Endothelial cell of umbilical vein (primary cell): ENCODE measurements at regions of chr13 and their contacts with region 1.

Region 1: DNA sequence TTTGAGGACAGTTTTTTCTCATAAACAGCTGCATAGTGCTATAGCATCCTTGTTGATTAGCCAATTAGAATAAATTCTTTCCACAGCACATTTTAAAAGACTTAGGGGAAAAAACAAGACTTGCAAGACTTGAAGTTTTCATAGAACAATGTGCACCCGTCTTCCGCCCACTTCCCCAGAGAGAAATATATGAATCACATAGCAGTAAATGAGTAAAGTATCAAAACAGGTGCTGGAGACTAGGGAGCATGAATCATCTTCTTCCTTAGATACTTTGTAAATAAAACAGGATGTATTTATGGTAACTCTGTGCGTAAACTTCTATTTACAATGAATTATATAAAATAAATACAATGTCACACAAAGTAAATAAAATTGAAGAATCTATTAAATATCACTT is 75.1 kb downstream of the COL4A2 start:
- DNase-seq: peak; percentile 90
- H3K4me3 ChIP-seq: no peak overlapping the region
- H3K27ac ChIP-seq: peak overlapping the region; percentile 89
- H3K4me1 ChIP-seq: peaks cover 37% of the 10 kb centered on the region
- H3K27me3 ChIP-seq: no peaks in the 10 kb centered on the region
- CTCF ChIP-seq: no peak
- POLR2A ChIP-seq: no peak

Region 2: DNA sequence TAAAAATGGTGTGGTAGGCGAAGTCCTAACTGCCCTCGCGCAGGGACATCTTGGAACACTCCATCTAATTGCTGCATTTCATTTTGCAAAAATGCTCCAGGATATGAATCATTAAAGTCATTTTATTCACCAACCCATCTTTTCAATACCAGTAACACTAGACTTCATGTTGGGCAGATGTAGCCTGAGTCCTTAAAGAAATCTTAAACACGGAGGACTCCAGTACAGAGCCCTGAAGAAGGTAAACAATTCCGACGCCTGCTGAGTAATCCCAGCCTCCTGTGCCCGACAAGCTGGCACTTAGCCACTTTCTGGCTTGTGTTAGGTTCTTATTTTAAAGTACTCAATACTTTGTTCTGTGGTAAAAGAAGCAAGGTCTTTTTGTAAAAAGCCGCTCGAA is 537.8 kb before region 1 on chr13:
- CTCF ChIA-PET with region 1: no interaction called
- POLR2A ChIA-PET with region 1: no interaction called
- dilution Hi-C with region 1: no loop called
- intact Hi-C with region 1: no loop called
- DNase-seq: no peak
- H3K4me3 ChIP-seq: no peak overlapping the region
- H3K27ac ChIP-seq: no peak overlapping the region
- H3K4me1 ChIP-seq: no peaks in the 10 kb centered on the region
- H3K27me3 ChIP-seq: no peaks in the 10 kb centered on the region
- CTCF ChIP-seq: no peak
- POLR2A ChIP-seq: no peak

Region 3: GRCh38 chr13:110319774-110320509 is 62.3 kb before region 1 on chr13:
- CTCF ChIA-PET with region 1: no interaction called
- POLR2A ChIA-PET with region 1: no interaction called
- dilution Hi-C with region 1: no loop called
- intact Hi-C with region 1: loop called (anchors 1 kb)
- DNase-seq: peak; percentile 87
- H3K4me3 ChIP-seq: peak overlapping the region in 1 of 3 experiments; percentile 30
- H3K27ac ChIP-seq: peak overlapping the region; percentile 97
- H3K4me1 ChIP-seq: peaks cover 36% of the 10 kb centered on the region
- H3K27me3 ChIP-seq: no peaks in the 10 kb centered on the region
- CTCF ChIP-seq: no peak
- POLR2A ChIP-seq: no peak

Region 4: DNA sequence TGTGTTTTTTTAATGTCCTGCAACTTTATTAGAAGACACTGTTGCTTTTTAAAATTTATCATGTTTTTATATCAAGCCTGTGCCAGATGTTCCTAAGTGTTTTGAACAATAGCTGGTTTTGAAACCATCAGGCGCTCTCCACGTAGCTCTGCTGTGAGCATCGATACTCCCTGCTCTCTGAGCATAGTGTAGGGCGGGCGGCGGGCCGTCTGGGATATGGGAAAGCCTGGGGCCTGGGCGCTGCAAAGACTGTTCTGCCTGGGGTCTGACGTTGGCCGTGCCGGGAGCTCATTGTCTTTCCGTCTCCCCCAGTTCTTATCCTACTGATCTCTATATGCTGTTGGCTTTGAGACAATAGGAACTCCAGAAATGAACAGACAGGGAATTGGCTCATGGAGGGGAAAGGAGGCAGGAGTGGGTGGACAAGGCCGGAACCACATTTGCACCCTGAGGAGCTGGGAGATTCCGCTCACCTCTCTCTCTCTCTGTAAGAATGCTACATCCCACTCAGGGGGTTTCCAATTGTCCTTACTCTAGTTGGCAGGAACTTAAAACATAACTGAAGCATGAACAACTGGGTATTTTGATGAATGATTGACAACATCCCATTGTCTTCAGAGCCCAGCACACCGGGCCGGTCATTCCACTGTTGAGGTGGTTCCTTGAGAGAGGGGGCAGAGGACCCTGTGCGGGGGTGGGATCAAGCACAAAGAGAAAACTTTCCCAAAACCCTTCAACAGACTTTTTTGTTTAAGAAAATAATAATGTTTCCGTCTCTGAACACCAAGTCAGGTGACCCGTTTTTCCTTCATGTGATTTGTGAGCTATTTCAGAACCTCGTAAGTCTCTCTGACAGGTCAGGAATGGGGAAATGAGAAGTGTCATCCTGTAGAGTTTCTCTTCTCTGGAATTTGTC is 10.4 kb before region 1 on chr13:
- CTCF ChIA-PET with region 1: no interaction called
- POLR2A ChIA-PET with region 1: no interaction called
- dilution Hi-C with region 1: no loop called
- intact Hi-C with region 1: loop called (anchors 1 kb)
- DNase-seq: peak; percentile 81
- H3K4me3 ChIP-seq: no peak overlapping the region
- H3K27ac ChIP-seq: peak overlapping the region; percentile 72
- H3K4me1 ChIP-seq: peaks cover 45% of the 10 kb centered on the region
- H3K27me3 ChIP-seq: no peaks in the 10 kb centered on the region
- CTCF ChIP-seq: no peak
- POLR2A ChIP-seq: no peak

Region 5: DNA sequence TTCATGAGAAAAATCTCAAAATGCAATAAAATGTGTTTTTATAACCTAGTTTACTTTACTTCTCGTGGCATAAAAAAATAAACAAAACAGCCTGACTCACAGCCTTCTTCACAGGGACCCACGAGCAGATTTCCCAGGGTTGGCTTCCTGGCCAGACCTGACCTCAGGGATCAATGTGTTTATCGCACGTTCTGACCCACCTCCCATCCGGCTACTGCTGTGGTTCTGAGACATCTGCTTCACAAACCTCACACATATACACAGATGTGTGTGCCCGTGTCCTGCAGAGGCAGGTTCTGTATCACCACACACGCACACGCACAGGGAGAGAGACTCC is 43.2 kb after region 1 on chr13:
- CTCF ChIA-PET with region 1: no interaction called
- POLR2A ChIA-PET with region 1: no interaction called
- dilution Hi-C with region 1: no loop called
- intact Hi-C with region 1: loop called (anchors 1 kb)
- DNase-seq: peak; percentile 93
- H3K4me3 ChIP-seq: no peak overlapping the region
- H3K27ac ChIP-seq: peak overlapping the region; percentile 89
- H3K4me1 ChIP-seq: peaks cover 54% of the 10 kb centered on the region
- H3K27me3 ChIP-seq: no peaks in the 10 kb centered on the region
- CTCF ChIP-seq: no peak
- POLR2A ChIP-seq: no peak